ENCODE measurements at regions of chr1 and their contacts with region 1.

Region 1: GRCh38 chr1:197521118-197521739 is 253.2 kb downstream of the CRB1 start:
- DNase-seq: peak; percentile 54
- ATAC-seq: peak; percentile 49
- H3K4me3 ChIP-seq: no peak overlapping the region
- H3K4me3 Mint-ChIP-seq: no peak overlapping the region
- H3K27ac ChIP-seq: no peak overlapping the region
- H3K27ac Mint-ChIP-seq: no peak overlapping the region
- H3K4me1 ChIP-seq: no peaks in the 10 kb centered on the region
- H3K4me1 Mint-ChIP-seq: no peaks in the 10 kb centered on the region
- H3K27me3 ChIP-seq: no peaks in the 10 kb centered on the region
- H3K27me3 Mint-ChIP-seq: no peaks in the 10 kb centered on the region
- CTCF ChIP-seq: peak; percentile 84

Region 2: DNA sequence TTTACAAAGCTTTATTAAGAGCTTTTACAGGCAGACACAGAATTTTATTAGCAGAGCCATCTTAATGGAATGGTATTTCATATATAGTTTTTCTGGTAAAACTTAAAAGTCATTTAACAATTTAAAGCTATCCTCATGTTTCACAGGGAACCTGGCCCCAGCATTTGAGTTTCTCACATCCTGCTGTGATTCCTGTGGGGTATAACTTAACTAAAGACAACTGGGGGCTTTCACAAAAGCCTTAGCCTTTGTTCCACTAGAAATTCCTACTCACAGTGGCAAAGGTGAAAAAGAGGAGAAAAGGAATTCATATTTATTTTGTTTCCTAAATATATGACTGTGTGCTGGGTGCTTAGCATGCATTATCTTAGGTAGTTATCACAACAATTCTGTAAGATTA is 20.2 kb after region 1 on chr1:
- CTCF ChIA-PET with region 1: interaction called, 10 read pairs
- POLR2A ChIA-PET with region 1: no interaction called
- intact Hi-C with region 1: no loop called
- DNase-seq: no peak
- ATAC-seq: no peak
- H3K4me3 ChIP-seq: no peak overlapping the region
- H3K4me3 Mint-ChIP-seq: no peak overlapping the region
- H3K27ac ChIP-seq: no peak overlapping the region
- H3K27ac Mint-ChIP-seq: no peak overlapping the region
- H3K4me1 ChIP-seq: no peaks in the 10 kb centered on the region
- H3K4me1 Mint-ChIP-seq: no peaks in the 10 kb centered on the region
- H3K27me3 ChIP-seq: no peaks in the 10 kb centered on the region
- H3K27me3 Mint-ChIP-seq: no peaks in the 10 kb centered on the region
- CTCF ChIP-seq: no peak

Region 3: GRCh38 chr1:197783510-197783948 is 262.3 kb after region 1 on chr1:
- CTCF ChIA-PET with region 1: no interaction called
- POLR2A ChIA-PET with region 1: no interaction called
- intact Hi-C with region 1: no loop called
- DNase-seq: no peak
- ATAC-seq: no peak
- H3K4me3 ChIP-seq: no peak overlapping the region
- H3K4me3 Mint-ChIP-seq: no peak overlapping the region
- H3K27ac ChIP-seq: no peak overlapping the region
- H3K27ac Mint-ChIP-seq: no peak overlapping the region
- H3K4me1 ChIP-seq: peaks cover 3 to 7% of the 10 kb centered on the region in 2 donors
- H3K4me1 Mint-ChIP-seq: peaks cover 18% of the 10 kb centered on the region
- H3K27me3 ChIP-seq: no peaks in the 10 kb centered on the region
- H3K27me3 Mint-ChIP-seq: no peaks in the 10 kb centered on the region
- CTCF ChIP-seq: no peak

Measured in B cell (primary cell).